PC-3 (cell line): ENCODE measurements at regions of chr6 and their contacts with region 1.

Region 1: GRCh38 chr6:105733565-105734162 is 330.8 kb upstream of the PREP start:
- DNase-seq: peak; percentile 55
- ATAC-seq: no peak
- H3K4me3 ChIP-seq: no peak overlapping the region
- H3K27ac ChIP-seq: no peak overlapping the region
- H3K4me1 ChIP-seq: no peaks in the 10 kb centered on the region
- H3K27me3 ChIP-seq: no peaks in the 10 kb centered on the region
- CTCF ChIP-seq: peak; percentile 78

Region 2: GRCh38 chr6:105522626-105523322 is 210.9 kb before region 1 on chr6:
- CTCF ChIA-PET with region 1: no interaction called
- POLR2A ChIA-PET with region 1: no interaction called
- intact Hi-C with region 1: loop called (anchors 2 kb)
- DNase-seq: peak; percentile 66
- ATAC-seq: no peak
- H3K4me3 ChIP-seq: no peak overlapping the region
- H3K27ac ChIP-seq: peak overlapping the region; percentile 13; the same call in 1 of the 2 replicates
- H3K4me1 ChIP-seq: peaks cover 20% of the 10 kb centered on the region
- H3K27me3 ChIP-seq: no peaks in the 10 kb centered on the region
- CTCF ChIP-seq: no peak

Region 3: DNA sequence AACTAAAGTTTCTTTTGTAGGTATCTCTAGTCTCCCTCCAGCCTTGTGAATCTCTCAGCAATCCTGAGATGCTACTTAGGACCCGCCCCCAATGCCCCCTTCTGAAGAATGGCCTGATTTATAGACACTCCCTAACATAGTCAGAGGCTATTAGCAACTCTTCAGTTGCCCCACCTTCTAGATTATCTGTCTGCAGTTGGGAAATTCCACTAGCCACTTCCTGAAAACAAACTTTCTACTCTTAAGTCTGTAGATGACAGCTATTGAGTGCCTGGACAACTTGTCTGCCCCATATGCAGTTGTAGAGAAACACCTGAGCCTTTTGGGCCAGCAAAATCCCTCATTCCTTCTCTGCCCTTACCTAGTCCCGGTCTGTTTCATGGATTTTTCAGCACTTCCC is 142.6 kb before region 1 on chr6:
- CTCF ChIA-PET with region 1: no interaction called
- POLR2A ChIA-PET with region 1: no interaction called
- intact Hi-C with region 1: loop called (anchors 10 kb)
- DNase-seq: peak; percentile 53
- ATAC-seq: no peak
- H3K4me3 ChIP-seq: no peak overlapping the region
- H3K27ac ChIP-seq: peak overlapping the region; percentile 99
- H3K4me1 ChIP-seq: peaks cover 81% of the 10 kb centered on the region
- H3K27me3 ChIP-seq: no peaks in the 10 kb centered on the region
- CTCF ChIP-seq: no peak

Region 4: DNA sequence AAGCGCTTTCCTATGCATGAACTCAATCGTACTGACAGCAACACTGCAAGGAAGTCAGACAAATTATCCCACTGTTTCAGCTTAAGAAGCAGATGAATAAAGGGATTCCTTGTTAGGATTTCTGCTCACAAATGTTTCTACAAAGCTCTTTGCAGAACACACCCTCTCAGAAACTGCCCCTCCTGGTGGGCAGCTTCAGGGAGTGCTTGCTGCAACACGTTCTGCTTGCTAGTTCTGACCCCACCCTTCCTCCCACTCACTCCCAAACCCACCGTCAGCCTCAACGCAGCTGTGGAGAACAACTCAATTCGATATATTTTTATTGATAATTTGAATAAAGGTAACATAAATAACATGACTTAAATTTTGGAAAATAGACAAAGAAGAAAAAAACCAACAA is 101.7 kb after region 1 on chr6:
- CTCF ChIA-PET with region 1: no interaction called
- POLR2A ChIA-PET with region 1: no interaction called
- intact Hi-C with region 1: loop called (anchors 10 kb)
- DNase-seq: peak; percentile 42
- ATAC-seq: no peak
- H3K4me3 ChIP-seq: no peak overlapping the region
- H3K27ac ChIP-seq: no peak overlapping the region
- H3K4me1 ChIP-seq: peaks cover 9% of the 10 kb centered on the region
- H3K27me3 ChIP-seq: no peaks in the 10 kb centered on the region
- CTCF ChIP-seq: peak; percentile 54

Region 5: DNA sequence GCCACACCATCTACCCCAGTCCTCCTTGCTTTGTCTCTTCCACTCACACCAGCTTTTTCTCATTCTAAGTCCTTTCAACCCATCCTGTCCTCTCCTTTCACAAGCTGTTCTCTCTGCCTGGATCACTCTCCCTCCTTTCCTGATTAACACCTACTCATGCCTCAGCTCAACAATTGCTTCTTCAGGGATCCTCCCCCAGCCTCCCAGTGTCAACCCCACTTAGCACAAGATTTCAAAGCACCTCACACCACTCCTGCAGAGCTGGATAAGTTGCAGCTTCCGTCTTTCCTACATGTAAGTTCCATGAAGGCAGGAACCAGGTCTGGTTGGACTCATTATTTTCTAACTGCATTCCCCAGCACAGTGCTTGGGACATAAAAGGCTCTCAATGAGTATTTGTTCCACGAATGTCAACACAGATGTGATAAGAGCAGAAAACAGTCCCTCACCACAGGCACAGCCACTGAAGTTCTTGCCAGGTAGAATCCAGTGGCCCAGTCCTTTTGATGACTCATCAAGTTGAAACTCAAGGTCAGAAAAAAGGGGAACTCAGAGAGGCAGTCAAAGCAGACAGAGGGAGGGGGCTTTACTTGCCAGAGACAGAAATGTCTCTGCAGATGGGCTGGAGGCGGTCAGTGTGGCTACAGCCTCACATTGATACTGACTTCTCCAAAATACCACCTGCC is 159.1 kb after region 1 on chr6:
- CTCF ChIA-PET with region 1: no interaction called
- POLR2A ChIA-PET with region 1: no interaction called
- intact Hi-C with region 1: no loop called
- DNase-seq: no peak
- ATAC-seq: no peak
- H3K4me3 ChIP-seq: no peak overlapping the region
- H3K27ac ChIP-seq: no peak overlapping the region
- H3K4me1 ChIP-seq: peaks cover 21% of the 10 kb centered on the region
- H3K27me3 ChIP-seq: no peaks in the 10 kb centered on the region
- CTCF ChIP-seq: no peak

Region 6: DNA sequence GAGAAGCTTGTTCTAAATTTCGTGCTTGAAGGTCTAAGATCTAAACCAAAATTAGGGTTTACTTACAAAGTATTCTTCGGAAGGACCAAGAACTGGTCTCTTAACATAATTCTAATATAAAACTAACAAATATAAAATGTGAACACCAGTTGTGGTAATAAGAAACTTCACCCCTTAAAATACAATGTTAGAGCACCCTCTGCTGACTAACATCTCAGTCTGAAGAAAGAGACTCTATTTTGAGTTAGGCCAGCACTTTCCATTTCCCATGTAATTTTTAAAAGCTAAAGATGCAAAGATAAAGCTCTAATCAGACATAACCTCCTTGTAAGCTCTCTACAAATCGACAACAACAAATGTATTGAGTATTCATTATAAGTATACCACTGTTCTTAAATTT is 567.3 kb after region 1 on chr6:
- CTCF ChIA-PET with region 1: no interaction called
- POLR2A ChIA-PET with region 1: no interaction called
- intact Hi-C with region 1: loop called (anchors 5 kb)
- DNase-seq: peak; percentile 59
- ATAC-seq: no peak
- H3K4me3 ChIP-seq: no peak overlapping the region
- H3K27ac ChIP-seq: no peak overlapping the region
- H3K4me1 ChIP-seq: no peaks in the 10 kb centered on the region
- H3K27me3 ChIP-seq: no peaks in the 10 kb centered on the region
- CTCF ChIP-seq: peak; percentile 73